ENCODE measurements at regions of chr11 and their contacts with region 1.

Region 1: DNA sequence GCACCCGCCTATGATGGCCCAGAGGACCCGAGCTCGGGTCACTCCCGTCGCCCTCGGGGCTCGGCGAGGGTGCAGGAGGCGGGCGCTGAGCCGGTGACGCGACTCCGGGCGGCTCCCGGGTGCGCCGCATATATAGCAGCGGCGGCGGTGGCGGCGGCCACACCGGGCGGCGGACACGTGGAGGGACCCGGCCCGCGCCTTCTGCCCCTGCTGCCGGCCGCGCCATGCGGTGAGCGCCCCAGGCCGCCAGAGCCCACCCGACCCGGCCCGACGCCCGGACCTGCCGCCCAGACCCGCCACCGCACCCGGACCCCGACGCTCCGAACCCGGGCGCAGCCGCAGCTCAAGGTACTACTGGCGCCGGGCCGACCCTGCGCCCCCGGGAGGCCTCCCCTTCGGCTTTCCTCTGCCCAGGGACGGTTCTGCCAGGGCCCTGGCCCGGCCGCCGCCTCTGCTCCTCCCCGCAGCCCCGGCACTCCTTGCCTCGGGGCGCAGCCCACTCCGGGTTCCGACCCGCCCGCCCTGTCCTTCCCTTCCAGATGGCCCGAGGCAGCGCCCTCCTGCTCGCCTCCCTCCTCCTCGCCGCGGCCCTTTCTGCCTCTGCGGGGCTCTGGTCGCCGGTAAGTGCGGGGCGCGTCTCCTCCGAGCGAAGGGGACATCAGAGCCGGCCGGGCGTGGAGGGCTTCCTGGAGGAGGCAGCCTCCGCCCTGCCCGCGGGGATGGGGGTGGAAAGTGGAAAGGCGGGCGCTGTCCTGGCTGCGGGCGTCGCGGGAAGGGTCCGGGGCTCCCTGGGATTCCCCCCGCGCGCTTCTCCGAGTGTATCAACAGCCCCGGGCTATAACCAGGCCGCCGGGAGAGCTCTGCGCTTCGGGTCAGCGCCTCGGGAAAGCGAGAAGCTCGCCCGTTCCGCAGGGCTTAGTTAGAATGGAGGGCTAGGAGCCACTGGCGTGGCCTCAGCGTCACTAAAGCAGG is at the start of gene GAL:
- DNase-seq: no peak
- H3K4me3 ChIP-seq: no peak within 1 kb of the TSS
- CTCF ChIP-seq: no peak

Region 2: GRCh38 chr11:68632802-68633201 is 51.9 kb before region 1 on chr11:
- in situ Hi-C with region 1: no loop called
- DNase-seq: peak; percentile 60
- H3K4me3 ChIP-seq: no peak overlapping the region
- CTCF ChIP-seq: peak; percentile 78

Region 3: GRCh38 chr11:68767672-68768071 is 83.0 kb after region 1 on chr11:
- in situ Hi-C with region 1: loop called (anchors 5 kb)
- DNase-seq: no peak
- H3K4me3 ChIP-seq: no peak overlapping the region
- CTCF ChIP-seq: no peak

Measured in astrocyte of the cerebellum (primary cell).